IMR-90 (cell line): ENCODE measurements at regions of chr5 and their contacts with region 1.

Region 1: DNA sequence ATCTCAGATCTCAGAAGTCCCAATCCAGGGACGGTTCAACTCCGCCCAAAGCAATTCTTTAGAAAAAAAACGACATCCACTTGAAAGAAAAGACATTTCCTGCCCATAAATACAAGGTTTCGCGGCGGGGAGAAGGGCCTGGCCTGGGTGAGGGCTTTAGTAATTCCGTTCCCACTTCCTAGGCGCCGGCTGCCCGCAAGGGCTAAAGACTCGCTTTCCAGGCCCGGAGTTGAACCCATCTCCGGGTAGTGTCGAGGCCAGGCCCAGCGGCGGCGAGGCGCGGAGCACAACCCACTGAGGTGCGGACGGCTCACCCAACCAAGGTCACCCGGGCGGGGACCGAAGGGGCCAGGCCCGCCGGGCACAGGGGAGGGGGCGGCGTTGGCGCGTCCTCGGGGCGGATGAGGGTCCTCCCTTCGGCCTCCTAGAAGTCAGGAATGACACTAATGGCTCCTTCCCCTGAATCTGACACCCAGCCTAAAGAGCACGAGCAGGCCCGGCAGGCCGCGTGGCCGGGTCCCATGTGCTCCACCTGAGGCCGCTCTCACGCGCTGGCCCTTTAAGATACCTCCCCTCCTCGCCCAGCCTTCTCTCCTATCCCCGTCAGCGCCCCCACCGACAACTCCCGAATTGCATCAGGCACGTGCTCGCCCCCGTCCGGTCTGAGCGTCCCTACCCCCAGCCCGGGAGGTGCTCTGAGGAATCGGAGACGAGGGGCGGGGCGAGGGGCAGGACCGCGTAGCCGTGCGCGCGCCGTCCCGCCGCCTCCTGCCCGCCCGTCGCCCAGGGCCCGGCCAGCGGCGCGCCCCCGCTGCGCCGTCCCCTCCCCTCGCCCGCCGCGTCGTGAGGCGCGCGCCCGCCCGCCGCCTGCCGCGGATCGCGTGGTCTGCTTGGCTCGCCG is 467 bp upstream of the LARP1 start:
- DNase-seq: peak; percentile 98
- ATAC-seq: peak; percentile 86
- H3K4me3 ChIP-seq: peak overlapping the region; percentile 98
- H3K27ac ChIP-seq: peak overlapping the region; percentile 97
- H3K4me1 ChIP-seq: peaks cover 16% of the 10 kb centered on the region
- H3K27me3 ChIP-seq: no peaks in the 10 kb centered on the region
- CTCF ChIP-seq: peak; percentile 58
- POLR2A ChIP-seq: peak; percentile 60
- RAD21 ChIP-seq: peak; percentile 34

Region 2: DNA sequence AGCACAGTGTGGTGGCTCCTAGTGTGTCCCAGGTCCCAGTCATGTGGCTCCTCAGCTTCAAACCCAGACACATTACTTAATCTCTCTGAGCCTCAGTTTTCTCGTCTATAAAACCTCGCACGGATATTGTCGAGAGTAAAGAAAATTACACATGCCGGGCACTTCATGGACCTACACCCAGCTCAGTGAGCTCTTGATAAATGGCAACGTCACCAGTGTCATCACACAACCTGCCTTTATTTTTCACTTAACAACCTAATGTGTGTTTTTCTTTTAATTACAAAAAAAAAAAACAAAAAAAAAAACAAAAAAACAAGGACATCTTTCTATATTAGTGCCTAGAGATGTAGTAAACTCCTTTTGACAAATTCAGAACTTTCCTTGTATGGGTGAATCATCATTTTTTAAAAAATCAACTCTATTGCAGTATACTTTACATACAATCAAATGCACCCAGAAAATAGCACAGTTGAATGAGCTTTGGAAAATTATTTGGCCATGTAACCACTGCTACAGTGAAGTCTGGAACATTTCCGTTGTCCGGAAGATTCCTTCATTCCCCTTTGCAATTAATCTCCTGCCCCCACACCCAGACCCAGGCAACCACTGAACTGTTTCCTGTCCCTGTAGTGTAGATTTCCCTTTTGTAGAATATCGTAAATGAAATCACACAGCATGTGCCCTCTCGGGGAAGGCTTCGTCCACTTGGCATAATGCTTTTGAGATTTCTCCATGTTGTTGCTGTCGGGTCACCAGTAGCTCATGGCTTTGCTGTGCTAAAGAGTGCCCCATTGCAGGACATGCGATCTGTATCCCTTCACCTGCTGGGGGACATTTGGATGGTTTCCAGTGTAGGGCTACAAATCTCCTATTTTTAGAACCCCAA is 100.0 kb before region 1 on chr5:
- CTCF ChIA-PET with region 1: no interaction called
- POLR2A ChIA-PET with region 1: no interaction called
- dilution Hi-C with region 1: no loop called
- in situ Hi-C with region 1: no loop called
- intact Hi-C with region 1: loop called (anchors 1 kb)
- DNase-seq: no peak
- ATAC-seq: no peak
- H3K4me3 ChIP-seq: no peak overlapping the region
- H3K27ac ChIP-seq: no peak overlapping the region
- H3K4me1 ChIP-seq: peaks cover 4% of the 10 kb centered on the region; the same call in 1 of the 2 replicates
- H3K27me3 ChIP-seq: peaks cover 2% of the 10 kb centered on the region; the same call in 1 of the 2 replicates
- CTCF ChIP-seq: no peak
- POLR2A ChIP-seq: no peak
- RAD21 ChIP-seq: no peak

Region 3: GRCh38 chr5:154714266-154714986 is 40.3 kb before region 1 on chr5:
- CTCF ChIA-PET with region 1: no interaction called
- POLR2A ChIA-PET with region 1: no interaction called
- dilution Hi-C with region 1: no loop called
- in situ Hi-C with region 1: no loop called
- intact Hi-C with region 1: loop called (anchors 5 kb)
- DNase-seq: peak; percentile 77
- ATAC-seq: peak; percentile 88
- H3K4me3 ChIP-seq: no peak overlapping the region
- H3K27ac ChIP-seq: peak overlapping the region; percentile 83; the same call in 1 of the 2 replicates
- H3K4me1 ChIP-seq: peaks cover 12% of the 10 kb centered on the region
- H3K27me3 ChIP-seq: no peaks in the 10 kb centered on the region
- CTCF ChIP-seq: no peak
- POLR2A ChIP-seq: no peak
- RAD21 ChIP-seq: no peak

Region 4: GRCh38 chr5:154729613-154730012 is 25.1 kb before region 1 on chr5:
- CTCF ChIA-PET with region 1: no interaction called
- POLR2A ChIA-PET with region 1: no interaction called
- dilution Hi-C with region 1: no loop called
- in situ Hi-C with region 1: no loop called
- intact Hi-C with region 1: no loop called
- DNase-seq: no peak
- ATAC-seq: no peak
- H3K4me3 ChIP-seq: no peak overlapping the region
- H3K27ac ChIP-seq: no peak overlapping the region
- H3K4me1 ChIP-seq: 0 out of 2 replicates have a peak, but pooled peaks cover under 1% of the 10 kb centered on the region
- H3K27me3 ChIP-seq: no peaks in the 10 kb centered on the region
- CTCF ChIP-seq: no peak
- POLR2A ChIP-seq: no peak
- RAD21 ChIP-seq: no peak

Region 5: GRCh38 chr5:154767576-154767975 is 12.9 kb after region 1 on chr5:
- CTCF ChIA-PET with region 1: no interaction called
- POLR2A ChIA-PET with region 1: no interaction called
- dilution Hi-C with region 1: no loop called
- in situ Hi-C with region 1: no loop called
- intact Hi-C with region 1: no loop called
- DNase-seq: no peak
- ATAC-seq: no peak
- H3K4me3 ChIP-seq: no peak overlapping the region
- H3K27ac ChIP-seq: no peak overlapping the region
- H3K4me1 ChIP-seq: peaks cover 22% of the 10 kb centered on the region
- H3K27me3 ChIP-seq: no peaks in the 10 kb centered on the region
- CTCF ChIP-seq: no peak
- POLR2A ChIP-seq: no peak
- RAD21 ChIP-seq: no peak

Region 6: DNA sequence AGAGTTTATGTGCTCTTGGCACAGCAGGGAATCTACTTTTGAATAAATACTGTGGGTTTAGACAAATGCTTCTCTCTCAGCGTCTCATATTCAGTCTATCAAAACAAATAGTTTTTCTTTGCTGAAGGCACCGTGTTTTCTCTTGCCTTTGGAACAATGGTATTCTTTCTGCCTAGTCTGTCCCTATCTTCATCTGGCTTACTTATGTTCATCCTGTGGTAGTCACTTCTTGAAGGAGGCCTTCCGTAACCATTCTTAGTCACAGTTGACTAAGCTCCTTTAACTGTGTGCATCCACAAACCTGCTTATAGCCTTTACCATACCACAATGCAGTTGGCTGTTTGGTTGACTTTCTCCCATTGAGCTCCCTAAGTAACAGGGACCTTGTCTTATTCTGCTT is 46.4 kb after region 1 on chr5:
- CTCF ChIA-PET with region 1: no interaction called
- POLR2A ChIA-PET with region 1: no interaction called
- dilution Hi-C with region 1: no loop called
- in situ Hi-C with region 1: loop called (anchors 5 kb)
- intact Hi-C with region 1: no loop called
- DNase-seq: peak; percentile 90
- ATAC-seq: peak; percentile 84
- H3K4me3 ChIP-seq: no peak overlapping the region
- H3K27ac ChIP-seq: no peak overlapping the region
- H3K4me1 ChIP-seq: peaks cover 8% of the 10 kb centered on the region
- H3K27me3 ChIP-seq: no peaks in the 10 kb centered on the region
- CTCF ChIP-seq: no peak
- POLR2A ChIP-seq: no peak
- RAD21 ChIP-seq: no peak

Region 7: DNA sequence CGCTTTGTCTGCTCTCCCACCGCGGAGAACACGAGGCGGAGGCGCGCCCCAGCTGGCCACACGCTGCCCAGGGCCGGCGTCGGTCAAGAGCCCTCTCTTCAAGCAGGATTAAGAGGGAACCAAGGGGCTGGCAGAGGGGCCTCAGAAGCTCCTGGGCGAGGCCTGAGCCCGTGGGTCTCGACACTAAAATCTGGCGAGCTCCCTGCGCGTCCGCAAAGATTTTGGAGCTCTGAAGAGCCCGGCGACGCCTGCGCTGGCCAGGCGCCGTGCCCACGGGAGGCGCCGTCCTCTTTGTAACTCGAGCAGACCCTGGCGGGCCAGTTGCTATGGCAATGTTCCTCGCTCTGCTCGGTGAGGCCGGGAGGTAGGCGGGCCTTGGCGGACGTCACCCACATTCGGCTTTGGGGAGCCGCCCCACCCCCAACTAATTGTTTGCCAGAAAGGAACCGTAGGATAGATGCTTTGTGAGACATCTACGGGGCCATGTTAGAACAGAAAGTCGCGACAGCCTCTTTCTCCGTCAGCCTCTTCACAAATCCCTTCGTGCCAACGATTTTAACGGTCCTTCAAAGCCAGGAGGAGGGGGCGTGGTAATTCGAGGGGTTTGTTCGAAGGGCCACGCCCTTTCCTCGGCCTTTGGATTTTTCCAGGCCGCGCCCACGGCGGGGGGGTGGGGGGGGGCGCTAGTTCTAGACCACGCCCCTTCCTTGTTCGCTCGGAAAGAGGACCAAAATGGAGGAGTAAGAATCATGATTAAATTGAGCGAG is 103.0 kb after region 1 on chr5:
- CTCF ChIA-PET with region 1: no interaction called
- POLR2A ChIA-PET with region 1: no interaction called
- dilution Hi-C with region 1: no loop called
- in situ Hi-C with region 1: no loop called
- intact Hi-C with region 1: loop called (anchors 2 kb)
- DNase-seq: peak; percentile 96
- ATAC-seq: peak; percentile 81
- H3K4me3 ChIP-seq: peak overlapping the region; percentile 61
- H3K27ac ChIP-seq: peak overlapping the region; percentile 94
- H3K4me1 ChIP-seq: peaks cover 1% of the 10 kb centered on the region; the same call in 1 of the 2 replicates
- H3K27me3 ChIP-seq: no peaks in the 10 kb centered on the region
- CTCF ChIP-seq: 0 out of 2 replicates have a peak, but pooled peaks have one; percentile 0
- POLR2A ChIP-seq: peak; percentile 80
- RAD21 ChIP-seq: no peak